Endothelial cell of umbilical vein (primary cell): ENCODE measurements at regions of chr17 and their contacts with region 1.

Region 1: DNA sequence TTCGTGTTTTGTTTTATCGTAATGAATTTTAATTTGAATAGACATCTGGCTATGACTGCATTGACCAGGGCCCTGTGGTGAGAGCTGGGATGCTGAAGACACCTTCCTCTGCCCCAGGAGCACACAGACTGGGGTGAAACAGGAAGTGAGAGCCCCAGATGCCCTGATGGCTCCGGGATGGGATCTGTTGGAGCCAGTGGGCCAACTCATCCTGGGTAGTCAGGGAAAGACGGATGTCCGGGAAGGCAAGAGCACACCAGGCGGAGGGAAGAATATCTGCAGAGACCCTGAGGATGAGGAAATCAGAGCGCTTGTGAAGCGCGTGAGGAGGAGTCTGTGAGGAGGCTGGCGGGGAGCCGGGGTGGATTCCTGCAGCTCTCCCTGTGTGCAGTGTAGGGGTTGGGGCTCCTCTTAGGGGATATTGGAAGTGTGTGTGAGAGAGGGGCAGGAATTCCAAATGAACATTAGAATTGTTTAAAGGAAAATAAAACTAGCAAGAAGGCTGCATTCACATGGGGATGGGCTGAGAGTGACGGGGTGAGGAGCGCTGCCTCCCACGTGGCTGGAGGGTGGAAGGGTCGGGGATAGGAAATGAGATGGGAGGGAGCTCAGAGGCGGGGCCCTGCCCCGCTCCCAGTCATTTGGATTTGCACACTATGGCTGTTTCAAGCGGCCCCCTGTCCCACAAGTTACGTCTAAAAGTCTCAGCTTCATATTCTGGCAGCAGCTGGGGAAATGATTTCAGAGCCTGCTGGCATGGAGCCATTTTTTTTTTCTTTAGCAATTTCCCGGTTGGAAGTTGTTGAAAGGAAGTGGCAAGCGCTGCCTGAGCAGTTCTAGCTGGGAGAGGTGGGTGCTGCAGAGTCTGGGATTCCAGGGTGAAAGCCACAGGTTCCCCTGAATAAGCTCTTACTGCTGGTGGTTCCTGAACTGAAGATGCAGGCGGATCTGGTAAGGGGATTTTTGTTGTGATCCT is 71.2 kb upstream of the LGALS9 start:
- DNase-seq: peak; percentile 96
- H3K4me3 ChIP-seq: peak overlapping the region in 2 of 3 experiments; percentile 3 to 49
- H3K27ac ChIP-seq: peak overlapping the region; percentile 86
- H3K4me1 ChIP-seq: peaks cover 59% of the 10 kb centered on the region
- H3K27me3 ChIP-seq: no peaks in the 10 kb centered on the region
- CTCF ChIP-seq: peak; percentile 12 to 21
- POLR2A ChIP-seq: peak; percentile 68

Region 2: GRCh38 chr17:27381007-27381501 is 178.7 kb before region 1 on chr17:
- CTCF ChIA-PET with region 1: interaction called, 7 read pairs
- POLR2A ChIA-PET with region 1: interaction called, 3 read pairs
- dilution Hi-C with region 1: no loop called
- intact Hi-C with region 1: loop called (anchors 1 kb)
- DNase-seq: peak; percentile 51
- H3K4me3 ChIP-seq: no peak overlapping the region
- H3K27ac ChIP-seq: peak overlapping the region; percentile 77
- H3K4me1 ChIP-seq: peaks cover 45% of the 10 kb centered on the region
- H3K27me3 ChIP-seq: no peaks in the 10 kb centered on the region
- CTCF ChIP-seq: peak; percentile 94 to 95
- POLR2A ChIP-seq: no peak

Region 3: GRCh38 chr17:27446569-27447301 is 113.1 kb before region 1 on chr17:
- CTCF ChIA-PET with region 1: interaction called, 3 read pairs
- POLR2A ChIA-PET with region 1: no interaction called
- dilution Hi-C with region 1: loop called (anchors 25 kb)
- intact Hi-C with region 1: loop called (anchors 1 kb)
- DNase-seq: peak; percentile 97
- H3K4me3 ChIP-seq: no peak overlapping the region
- H3K27ac ChIP-seq: peak overlapping the region; percentile 75
- H3K4me1 ChIP-seq: peaks cover 23% of the 10 kb centered on the region
- H3K27me3 ChIP-seq: no peaks in the 10 kb centered on the region
- CTCF ChIP-seq: no peak
- POLR2A ChIP-seq: no peak

Region 4: GRCh38 chr17:27455914-27456680 is 103.7 kb before region 1 on chr17 and contains the start of gene KSR1:
- CTCF ChIA-PET with region 1: interaction called, 20 read pairs
- POLR2A ChIA-PET with region 1: interaction called, 8 read pairs
- dilution Hi-C with region 1: no loop called
- intact Hi-C with region 1: no loop called
- DNase-seq: peak; percentile 78
- H3K4me3 ChIP-seq: peak within 1 kb of the TSS; percentile 24 to 85 (median 62)
- H3K27ac ChIP-seq: peak within 1 kb of the TSS; percentile 35
- H3K4me1 ChIP-seq: peaks cover 18% of the 10 kb centered on the region
- H3K27me3 ChIP-seq: no peaks in the 10 kb centered on the region
- CTCF ChIP-seq: peak; percentile 39 to 74
- POLR2A ChIP-seq: peak; percentile 71
- total RNA-seq, gene KSR1: 55.6 and 80.2 TPM in 2 replicates

Region 5: GRCh38 chr17:27466743-27467375 is 92.9 kb before region 1 on chr17:
- CTCF ChIA-PET with region 1: interaction called, 3 read pairs
- POLR2A ChIA-PET with region 1: no interaction called
- dilution Hi-C with region 1: no loop called
- intact Hi-C with region 1: loop called (anchors 2 kb)
- DNase-seq: no peak
- H3K4me3 ChIP-seq: no peak overlapping the region
- H3K27ac ChIP-seq: no peak overlapping the region
- H3K4me1 ChIP-seq: peaks cover 11% of the 10 kb centered on the region
- H3K27me3 ChIP-seq: no peaks in the 10 kb centered on the region
- CTCF ChIP-seq: no peak
- POLR2A ChIP-seq: no peak

Region 6: GRCh38 chr17:27533856-27534815 is 25.7 kb before region 1 on chr17:
- CTCF ChIA-PET with region 1: interaction called, 10 read pairs
- POLR2A ChIA-PET with region 1: interaction called, 5 read pairs
- dilution Hi-C with region 1: no loop called
- intact Hi-C with region 1: no loop called
- DNase-seq: peak; percentile 52
- H3K4me3 ChIP-seq: no peak overlapping the region
- H3K27ac ChIP-seq: peak overlapping the region; percentile 38
- H3K4me1 ChIP-seq: peaks cover 28% of the 10 kb centered on the region
- H3K27me3 ChIP-seq: no peaks in the 10 kb centered on the region
- CTCF ChIP-seq: no peak
- POLR2A ChIP-seq: no peak